ENCODE measurements at regions of chr1 and their contacts with region 1.

Region 1: GRCh38 chr1:30522031-30523004 is 201.1 kb downstream of the MATN1 start:
- DNase-seq: peak; percentile 32
- H3K4me3 ChIP-seq: no peak overlapping the region
- H3K27ac ChIP-seq: no peak overlapping the region
- H3K4me1 ChIP-seq: peaks cover 23% of the 10 kb centered on the region
- H3K27me3 ChIP-seq: no peaks in the 10 kb centered on the region
- CTCF ChIP-seq: no peak

Region 2: GRCh38 chr1:30353637-30354036 is 168.7 kb before region 1 on chr1:
- CTCF ChIA-PET with region 1: no interaction called
- dilution Hi-C with region 1: no loop called
- in situ Hi-C with region 1: no loop called
- intact Hi-C with region 1: loop called (anchors 1 kb)
- DNase-seq: no peak
- H3K4me3 ChIP-seq: no peak overlapping the region
- H3K27ac ChIP-seq: no peak overlapping the region
- H3K4me1 ChIP-seq: no peaks in the 10 kb centered on the region
- H3K27me3 ChIP-seq: no peaks in the 10 kb centered on the region
- CTCF ChIP-seq: peak; percentile 26 to 68

Region 3: DNA sequence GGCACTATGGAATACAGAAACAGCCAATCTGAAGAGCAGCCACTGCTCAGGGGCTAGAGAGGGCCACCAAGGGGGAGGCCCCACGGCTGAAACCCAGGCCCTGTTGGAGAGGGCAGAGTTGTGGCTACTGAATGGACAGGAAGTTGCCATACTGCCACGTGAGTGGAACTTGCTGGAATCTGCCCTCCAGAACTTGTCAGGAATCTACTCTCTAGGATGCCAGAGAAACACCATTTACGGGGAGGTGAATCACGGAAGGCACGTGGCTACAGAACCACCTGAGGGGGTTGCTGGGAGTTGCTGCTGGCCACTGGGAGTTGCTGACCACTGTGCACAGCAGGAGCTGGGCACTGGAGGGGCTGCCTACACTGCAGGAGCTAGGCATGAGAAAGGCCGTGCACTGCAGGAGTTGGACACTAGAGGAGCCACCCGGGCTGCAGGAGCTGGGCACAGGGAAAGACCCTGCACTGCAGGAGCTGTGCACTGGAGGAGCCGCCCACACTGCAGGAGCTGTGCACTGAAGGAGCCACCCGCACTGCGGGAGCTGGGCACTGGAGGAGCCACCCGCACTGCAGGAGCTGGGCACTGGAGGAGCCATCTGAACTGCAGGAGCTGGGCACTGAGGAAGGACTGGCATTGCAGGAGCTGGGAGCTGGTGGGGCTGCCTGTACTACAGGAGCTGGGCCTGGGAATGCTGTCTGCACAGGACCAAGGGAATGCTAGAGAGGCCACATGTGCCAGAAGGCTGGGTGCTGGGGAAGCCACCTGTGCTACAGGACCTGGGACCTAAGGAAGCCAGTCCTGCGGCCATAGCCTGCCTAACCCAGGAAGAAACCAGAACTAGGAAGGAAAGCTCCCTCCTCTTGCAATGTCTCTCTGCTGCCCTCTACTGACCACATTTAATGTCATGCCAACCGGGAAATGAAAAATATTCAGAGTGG is 142.4 kb before region 1 on chr1:
- CTCF ChIA-PET with region 1: interaction called, 13 read pairs
- dilution Hi-C with region 1: no loop called
- in situ Hi-C with region 1: no loop called
- intact Hi-C with region 1: no loop called
- DNase-seq: peak; percentile 68
- H3K4me3 ChIP-seq: no peak overlapping the region
- H3K27ac ChIP-seq: no peak overlapping the region
- H3K4me1 ChIP-seq: peaks cover 23% of the 10 kb centered on the region
- H3K27me3 ChIP-seq: no peaks in the 10 kb centered on the region
- CTCF ChIP-seq: peak; percentile 89 to 93

Region 4: DNA sequence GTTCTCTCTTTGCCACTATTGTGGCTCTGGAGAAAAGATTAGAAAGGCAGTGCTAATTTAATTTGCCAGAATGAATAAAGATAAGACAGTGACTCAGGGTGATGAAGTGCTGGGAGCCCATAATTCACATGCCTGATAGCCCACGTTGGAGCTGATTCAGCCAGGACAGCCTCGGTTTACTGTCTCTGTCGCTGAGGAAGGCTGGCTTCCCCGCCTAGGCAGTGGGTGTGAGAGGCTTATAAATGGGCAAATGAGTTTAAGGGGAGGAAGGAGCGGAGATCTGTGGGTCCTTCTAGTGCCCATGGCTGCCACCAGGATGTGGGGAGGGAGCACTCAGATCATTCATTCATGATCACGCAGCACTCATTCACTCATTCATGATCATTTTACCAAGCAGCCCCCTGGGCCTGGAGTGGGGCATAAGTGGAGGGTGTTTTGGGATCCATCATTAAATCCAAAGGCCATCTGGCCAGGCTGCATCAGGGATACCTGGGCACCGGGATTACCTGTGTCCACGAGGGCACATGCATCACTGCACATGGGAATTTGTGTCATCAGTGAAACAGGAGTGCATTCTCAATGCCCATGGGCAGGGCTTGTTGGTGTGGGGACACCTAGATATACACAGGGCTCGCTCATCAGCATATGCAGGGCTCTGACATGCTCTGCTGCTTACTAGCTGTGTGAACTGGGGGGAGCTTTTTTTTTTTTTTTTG is 114.3 kb before region 1 on chr1:
- CTCF ChIA-PET with region 1: no interaction called
- dilution Hi-C with region 1: no loop called
- in situ Hi-C with region 1: no loop called
- intact Hi-C with region 1: loop called (anchors 1 kb)
- DNase-seq: no peak
- H3K4me3 ChIP-seq: no peak overlapping the region
- H3K27ac ChIP-seq: no peak overlapping the region
- H3K4me1 ChIP-seq: peaks cover 6% of the 10 kb centered on the region
- H3K27me3 ChIP-seq: no peaks in the 10 kb centered on the region
- CTCF ChIP-seq: no peak

Region 5: DNA sequence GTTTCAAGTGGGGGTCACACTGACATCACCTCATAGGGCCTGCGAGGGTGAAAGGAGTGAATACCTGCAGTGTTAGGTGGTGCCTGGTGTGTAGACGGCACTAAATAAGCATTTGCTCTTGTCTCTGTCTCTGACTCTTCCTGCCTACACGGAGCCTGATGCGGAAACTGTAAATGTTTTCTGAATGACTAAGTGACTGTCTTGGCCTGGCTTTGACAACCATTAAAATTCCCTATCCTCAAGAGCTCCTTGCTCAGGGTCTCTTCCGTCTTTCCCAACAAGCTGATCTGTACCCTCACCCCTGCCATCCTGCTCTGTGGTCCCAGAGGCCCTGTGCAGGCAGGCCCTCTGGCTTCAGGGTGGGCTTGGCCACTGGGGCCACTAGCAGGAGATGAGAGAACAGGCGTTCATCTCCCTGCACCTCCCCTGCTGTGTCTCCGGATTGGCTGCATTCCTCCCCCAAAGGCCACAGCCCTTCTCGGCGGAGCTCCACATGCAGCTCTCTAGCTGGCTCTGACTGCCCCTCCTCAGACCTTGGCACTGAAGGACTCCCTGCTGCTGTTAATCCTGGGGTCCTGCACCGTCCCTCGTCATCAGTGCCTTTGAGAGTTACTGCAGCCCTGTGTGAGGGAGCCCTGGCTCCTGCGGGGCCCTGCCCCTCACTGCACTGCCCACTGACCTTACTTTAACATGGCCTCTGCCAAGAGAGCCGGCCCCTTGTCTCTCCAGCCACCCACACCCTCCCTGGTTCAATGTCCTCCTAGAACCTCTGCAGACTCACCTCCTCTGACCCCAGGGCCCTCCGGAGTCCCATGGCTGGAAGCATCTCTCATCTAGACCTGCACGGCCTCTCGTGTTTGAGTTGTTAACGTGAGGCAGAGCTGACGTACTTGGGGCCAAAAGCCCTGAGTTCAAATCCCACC is 10.1 kb before region 1 on chr1:
- CTCF ChIA-PET with region 1: no interaction called
- dilution Hi-C with region 1: no loop called
- in situ Hi-C with region 1: no loop called
- intact Hi-C with region 1: loop called (anchors 1 kb)
- DNase-seq: no peak
- H3K4me3 ChIP-seq: no peak overlapping the region
- H3K27ac ChIP-seq: no peak overlapping the region
- H3K4me1 ChIP-seq: no peaks in the 10 kb centered on the region
- H3K27me3 ChIP-seq: no peaks in the 10 kb centered on the region
- CTCF ChIP-seq: no peak

Region 6: DNA sequence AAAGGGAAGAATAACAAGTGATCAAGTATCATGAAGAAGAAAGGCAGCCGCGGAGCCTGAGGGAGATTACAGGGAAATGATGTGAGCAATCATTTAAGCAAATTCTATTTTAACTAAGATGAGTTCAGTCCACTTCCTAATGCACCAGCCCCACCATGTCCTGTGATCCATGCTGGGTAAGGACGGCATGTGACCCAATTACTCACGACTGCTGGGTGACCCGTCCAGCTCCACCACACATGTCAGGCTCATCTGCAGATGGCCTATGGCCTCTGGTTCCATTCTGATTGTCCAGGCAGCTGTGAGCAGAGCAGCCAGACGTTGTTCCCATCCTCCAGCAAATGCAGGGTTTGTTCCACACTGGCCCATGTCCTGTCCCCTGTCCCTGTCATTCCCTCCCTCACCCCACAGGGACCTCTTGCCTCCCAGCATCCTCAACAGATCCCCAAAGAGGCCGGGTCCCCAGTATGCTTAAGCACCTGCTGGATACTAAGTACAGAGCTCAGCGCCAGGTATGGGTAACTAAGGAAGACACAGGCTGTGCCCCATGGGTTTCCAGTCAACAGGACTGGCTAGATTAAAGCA is 113.2 kb after region 1 on chr1:
- CTCF ChIA-PET with region 1: no interaction called
- dilution Hi-C with region 1: no loop called
- in situ Hi-C with region 1: no loop called
- intact Hi-C with region 1: no loop called
- DNase-seq: no peak
- H3K4me3 ChIP-seq: no peak overlapping the region
- H3K27ac ChIP-seq: no peak overlapping the region
- H3K4me1 ChIP-seq: no peaks in the 10 kb centered on the region
- H3K27me3 ChIP-seq: no peaks in the 10 kb centered on the region
- CTCF ChIP-seq: no peak

Region 7: GRCh38 chr1:30645807-30646206 is 123.5 kb after region 1 on chr1:
- CTCF ChIA-PET with region 1: no interaction called
- dilution Hi-C with region 1: no loop called
- in situ Hi-C with region 1: no loop called
- intact Hi-C with region 1: loop called (anchors 2 kb)
- DNase-seq: peak; percentile 90
- H3K4me3 ChIP-seq: no peak overlapping the region
- H3K27ac ChIP-seq: no peak overlapping the region
- H3K4me1 ChIP-seq: peaks cover 37% of the 10 kb centered on the region
- H3K27me3 ChIP-seq: no peaks in the 10 kb centered on the region
- CTCF ChIP-seq: no peak

Region 8: GRCh38 chr1:30700528-30701257 is 178.4 kb after region 1 on chr1:
- CTCF ChIA-PET with region 1: no interaction called
- dilution Hi-C with region 1: no loop called
- in situ Hi-C with region 1: no loop called
- intact Hi-C with region 1: loop called (anchors 5 kb)
- DNase-seq: peak; percentile 68
- H3K4me3 ChIP-seq: no peak overlapping the region
- H3K27ac ChIP-seq: no peak overlapping the region
- H3K4me1 ChIP-seq: peaks cover 24% of the 10 kb centered on the region
- H3K27me3 ChIP-seq: no peaks in the 10 kb centered on the region
- CTCF ChIP-seq: no peak

Measured in mammary epithelial cell (primary cell).